ENCODE measurements at regions of chr14 and their contacts with region 1.

Region 1: GRCh38 chr14:71720978-71721624 is 211.1 kb upstream of the RGS6 start:
- DNase-seq: no peak
- H3K4me3 ChIP-seq: no peak overlapping the region
- CTCF ChIP-seq: peak; percentile 68

Region 2: DNA sequence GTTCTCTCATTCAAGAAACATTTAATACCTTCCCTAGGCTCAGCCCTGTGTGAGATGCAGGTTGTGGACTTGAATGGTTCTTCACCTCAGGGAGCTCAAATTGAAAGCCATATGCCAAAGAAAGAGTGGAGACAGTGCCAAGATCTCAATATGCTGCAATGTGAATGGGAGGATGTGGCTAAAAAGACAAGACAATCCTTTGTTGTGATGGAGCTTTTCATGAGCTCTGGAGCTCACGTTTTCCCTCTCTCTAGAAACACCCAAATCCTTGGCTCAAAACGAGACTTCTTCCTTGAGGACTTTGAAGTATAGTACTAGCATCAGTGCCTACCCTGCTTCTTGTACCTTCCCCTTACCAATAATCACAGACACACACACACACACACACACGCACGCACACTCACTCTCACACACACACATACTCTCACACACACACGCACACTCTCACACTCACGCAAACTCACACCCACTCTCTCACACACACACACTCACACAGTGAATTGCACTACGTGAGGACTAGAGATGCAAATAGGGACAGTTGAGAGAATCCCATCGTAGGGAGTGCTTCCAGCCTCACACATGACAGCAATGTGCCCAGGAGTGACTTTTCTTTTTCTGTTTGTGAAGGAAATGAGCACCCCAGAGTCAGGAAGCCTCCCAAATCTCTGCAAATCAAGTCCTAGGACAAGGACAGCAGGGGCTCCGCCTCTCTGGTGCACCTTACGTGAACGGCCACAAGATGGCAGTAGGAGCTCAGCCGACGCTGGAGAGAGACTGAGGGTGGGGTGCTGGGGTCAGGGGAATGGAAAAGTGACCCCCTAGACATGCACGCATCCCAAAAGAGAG is 582.4 kb before region 1 on chr14:
- CTCF ChIA-PET with region 1: interaction called, 10 read pairs
- POLR2A ChIA-PET with region 1: no interaction called
- DNase-seq: no peak
- H3K4me3 ChIP-seq: no peak overlapping the region
- CTCF ChIP-seq: peak; percentile 91

Region 3: GRCh38 chr14:71733210-71733883 is 12.2 kb after region 1 on chr14:
- CTCF ChIA-PET with region 1: interaction called, 39 read pairs
- POLR2A ChIA-PET with region 1: no interaction called
- DNase-seq: no peak
- H3K4me3 ChIP-seq: no peak overlapping the region
- CTCF ChIP-seq: no peak

Region 4: DNA sequence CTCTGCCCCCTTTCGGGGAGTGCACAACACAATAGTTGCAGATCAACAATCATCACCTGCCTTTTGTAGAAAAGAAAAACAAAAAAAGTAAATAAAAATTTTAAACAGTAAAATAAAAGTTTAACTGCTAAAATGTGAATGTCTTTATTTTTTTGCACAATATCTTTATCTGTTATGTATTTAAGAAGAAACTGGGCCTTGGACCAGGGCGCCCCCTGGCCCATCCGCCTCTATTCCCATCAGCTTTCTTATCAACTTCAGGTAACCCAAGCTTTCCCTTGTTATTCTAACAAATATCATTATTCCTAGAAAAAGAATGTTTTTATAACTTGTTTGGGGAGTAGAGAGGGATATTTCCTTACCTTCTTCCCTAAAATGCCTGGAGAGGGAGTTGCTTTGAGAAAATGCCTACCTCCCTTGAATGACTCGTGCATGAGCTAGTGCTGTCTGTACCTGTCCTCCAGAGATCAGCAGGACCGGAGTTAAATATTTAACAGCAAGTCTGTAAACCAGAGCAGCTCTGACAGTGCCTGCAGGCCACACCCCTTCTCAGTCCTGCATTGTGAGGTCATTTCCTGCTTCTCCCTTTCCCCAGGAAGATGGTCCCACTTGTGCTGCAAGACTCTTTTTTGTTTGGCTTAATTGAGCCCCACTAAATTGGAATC is 18.3 kb after region 1 on chr14:
- CTCF ChIA-PET with region 1: interaction called, 39 read pairs
- POLR2A ChIA-PET with region 1: no interaction called
- DNase-seq: no peak
- H3K4me3 ChIP-seq: no peak overlapping the region
- CTCF ChIP-seq: no peak

Region 5: GRCh38 chr14:71762575-71762974 is 41.5 kb after region 1 on chr14:
- CTCF ChIA-PET with region 1: no interaction called
- POLR2A ChIA-PET with region 1: no interaction called
- DNase-seq: no peak
- H3K4me3 ChIP-seq: no peak overlapping the region
- CTCF ChIP-seq: no peak

Region 6: DNA sequence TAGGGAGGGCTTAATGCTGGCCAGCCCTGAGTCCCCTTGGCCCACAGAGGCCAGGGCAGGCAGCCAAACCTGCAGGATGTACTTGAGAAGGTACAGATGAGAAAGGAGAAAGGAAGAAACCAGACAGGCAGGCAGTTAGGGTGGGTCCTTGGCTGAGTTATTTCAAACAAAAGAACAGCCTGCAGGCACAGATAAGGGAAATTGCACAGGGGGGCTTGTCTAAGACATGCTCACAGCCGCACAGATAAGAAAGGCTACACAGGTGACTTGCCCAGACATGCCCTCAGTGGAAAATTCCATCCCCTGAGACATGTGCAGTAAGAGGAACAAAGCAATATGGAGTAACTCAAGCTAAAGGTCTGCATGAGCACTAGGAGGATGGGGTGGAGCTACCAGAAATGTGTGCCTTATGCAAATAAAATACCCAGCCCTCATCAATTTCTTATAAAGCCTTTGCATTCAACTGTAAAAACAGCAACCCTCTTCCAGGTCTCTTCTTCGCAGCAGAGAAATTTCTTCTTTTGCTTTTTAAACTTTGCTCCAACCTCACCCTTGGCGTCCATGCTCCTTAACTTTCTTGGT is 52.9 kb after region 1 on chr14:
- CTCF ChIA-PET with region 1: no interaction called
- POLR2A ChIA-PET with region 1: no interaction called
- DNase-seq: no peak
- H3K4me3 ChIP-seq: no peak overlapping the region
- CTCF ChIP-seq: no peak

Region 7: DNA sequence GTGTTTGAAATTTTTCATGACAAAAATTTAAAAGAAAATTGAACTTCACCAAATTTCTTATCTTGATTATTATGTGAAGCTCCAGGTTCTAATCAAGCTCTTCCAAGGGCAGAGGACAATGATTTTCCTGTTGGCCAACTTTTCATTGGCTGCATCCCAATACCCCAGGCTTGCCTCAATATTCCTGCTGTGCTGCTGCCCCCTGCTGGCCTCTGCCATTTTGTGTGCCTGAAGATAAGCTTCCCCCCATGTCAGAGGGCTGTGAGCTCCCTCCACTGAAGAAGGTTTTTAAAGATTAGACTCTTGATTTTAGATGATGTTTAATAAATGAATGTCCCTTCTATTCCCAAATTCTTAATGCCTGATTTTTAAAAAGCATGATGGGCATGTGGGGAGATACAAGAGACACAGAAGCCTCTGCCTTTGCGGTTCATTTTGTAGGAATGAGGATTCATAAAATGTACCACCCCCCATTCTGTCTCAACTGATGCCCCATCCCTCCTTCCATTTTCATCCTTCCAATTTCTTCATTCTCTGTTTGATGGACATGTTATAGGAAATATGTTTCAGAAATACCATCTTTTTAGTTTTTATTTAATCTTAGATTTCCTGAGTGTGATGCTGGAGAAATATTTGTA is 134.4 kb after region 1 on chr14:
- CTCF ChIA-PET with region 1: interaction called, 17 read pairs
- POLR2A ChIA-PET with region 1: no interaction called
- DNase-seq: peak; percentile 4
- H3K4me3 ChIP-seq: no peak overlapping the region
- CTCF ChIP-seq: peak; percentile 83

Measured in AG04449 (cell line).